ENCODE measurements at regions of chr12 and their contacts with region 1.

Region 1: DNA sequence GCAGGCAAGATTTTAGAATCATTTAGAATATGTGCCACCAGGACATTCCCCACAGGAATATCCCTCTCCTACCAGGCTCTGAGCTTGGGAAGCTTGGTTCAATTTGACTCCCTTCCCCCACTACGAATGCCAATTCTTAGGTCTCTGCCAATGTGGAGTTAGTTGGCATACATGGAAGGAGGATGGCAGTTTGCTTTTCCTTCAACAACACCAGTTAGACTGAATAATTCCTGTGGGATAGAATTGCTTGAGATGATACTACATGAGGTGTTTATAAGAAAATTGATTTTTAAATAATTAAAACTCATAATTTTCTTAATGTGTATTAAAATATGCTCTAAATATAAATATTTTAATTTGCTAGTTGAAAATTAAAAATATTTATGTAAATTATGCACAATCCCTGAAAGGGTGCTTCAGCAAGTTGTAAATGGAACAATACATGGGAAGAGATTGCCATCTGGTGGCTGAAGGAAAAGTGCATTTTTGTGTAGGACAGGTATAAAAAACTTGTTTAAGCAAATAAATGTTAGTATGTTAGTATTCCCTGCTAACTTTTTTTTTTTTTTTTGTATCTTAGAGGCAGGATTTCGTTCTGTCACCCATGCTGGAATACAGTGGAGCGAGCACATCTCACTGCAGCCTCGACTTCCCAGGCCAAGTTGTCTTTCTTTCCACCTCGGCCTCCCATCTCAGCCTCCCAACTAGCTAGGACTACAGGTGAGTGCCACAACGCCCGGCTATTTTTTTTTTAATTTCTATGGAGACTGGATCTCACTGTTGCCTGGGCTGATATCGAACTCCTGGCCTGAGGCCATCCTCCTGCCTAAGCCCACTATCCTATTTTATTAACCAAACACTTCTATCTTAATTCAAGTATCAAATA is 25.8 kb upstream of the STRAP start:
- DNase-seq: peak in 3 of 4 donors; percentile 5 to 69 (median 53)
- ATAC-seq: peak; percentile 85
- H3K4me3 ChIP-seq: no peak overlapping the region
- H3K27ac ChIP-seq: no peak overlapping the region
- H3K4me1 ChIP-seq: no peaks in the 10 kb centered on the region
- H3K27me3 ChIP-seq: no peaks in the 10 kb centered on the region
- CTCF ChIP-seq: peak; percentile 61 to 74

Region 2: DNA sequence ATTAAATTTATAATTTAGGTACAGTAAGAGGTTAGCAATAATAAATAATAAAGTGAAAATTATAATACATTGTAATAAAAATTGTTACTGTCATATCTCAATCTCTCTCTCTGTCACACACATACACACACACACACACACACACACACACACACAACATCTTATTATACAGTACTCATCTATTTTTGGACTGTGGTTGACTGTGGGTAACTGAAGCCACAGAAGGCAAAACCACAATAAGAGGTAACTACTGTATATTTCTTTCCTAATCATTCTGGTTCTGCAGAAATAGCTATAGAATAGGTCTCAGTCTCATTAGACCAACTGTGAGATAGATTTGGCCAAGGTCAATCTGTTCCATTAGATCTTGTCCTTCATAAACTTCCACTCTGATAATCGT is 567.1 kb before region 1 on chr12:
- intact Hi-C with region 1: loop called in 1 of 2 experiments (anchors 10 kb)
- DNase-seq: no peak
- ATAC-seq: no peak
- H3K4me3 ChIP-seq: no peak overlapping the region
- H3K27ac ChIP-seq: no peak overlapping the region
- H3K4me1 ChIP-seq: no peaks in the 10 kb centered on the region
- H3K27me3 ChIP-seq: peaks cover 0 to 7% of the 10 kb centered on the region in 2 donors
- CTCF ChIP-seq: no peak

Region 3: GRCh38 chr12:15590180-15590826 is 266.0 kb before region 1 on chr12:
- intact Hi-C with region 1: loop called (anchors 2 to 10 kb)
- DNase-seq: peak; percentile 35 to 72 (median 61)
- ATAC-seq: peak; percentile 99
- H3K4me3 ChIP-seq: no peak overlapping the region
- H3K27ac ChIP-seq: no peak overlapping the region
- H3K4me1 ChIP-seq: peaks cover 0 to 10% of the 10 kb centered on the region in 2 donors
- H3K27me3 ChIP-seq: no peaks in the 10 kb centered on the region
- CTCF ChIP-seq: peak; percentile 79 to 87

Measured in left lung (tissue), 14 donors.